ENCODE measurements at regions of chr6 and their contacts with region 1.

Region 1: GRCh38 chr6:152129691-152130151 is 322.2 kb downstream of the ESR1 start:
- DNase-seq: peak in 1 of 5 donors; percentile 29
- ATAC-seq: peak; percentile 58 to 81 (median 80)
- H3K4me3 ChIP-seq: peak overlapping the region in 10 of 12 donors; percentile 1 to 53 (median 41)
- H3K27ac ChIP-seq: peak overlapping the region; percentile 52 to 82 (median 72)
- H3K4me1 ChIP-seq: peaks cover 0 to 48% (median 19%) of the 10 kb centered on the region in 12 donors
- H3K27me3 ChIP-seq: no peaks in the 10 kb centered on the region
- CTCF ChIP-seq: no peak
- POLR2A ChIP-seq: no peak

Region 2: GRCh38 chr6:151765444-151765886 is 364.3 kb before region 1 on chr6:
- intact Hi-C with region 1: loop called (anchors 2 to 5 kb)
- DNase-seq: peak in 4 of 5 donors; percentile 27 to 41 (median 32)
- ATAC-seq: peak in 3 of 4 donors; percentile 61 to 65 (median 61)
- H3K4me3 ChIP-seq: no peak overlapping the region
- H3K27ac ChIP-seq: no peak overlapping the region
- H3K4me1 ChIP-seq: peaks cover 0 to 12% (median 1%) of the 10 kb centered on the region in 12 donors
- H3K27me3 ChIP-seq: no peaks in the 10 kb centered on the region
- CTCF ChIP-seq: peak; percentile 58 to 81 (median 73)
- POLR2A ChIP-seq: no peak

Region 3: DNA sequence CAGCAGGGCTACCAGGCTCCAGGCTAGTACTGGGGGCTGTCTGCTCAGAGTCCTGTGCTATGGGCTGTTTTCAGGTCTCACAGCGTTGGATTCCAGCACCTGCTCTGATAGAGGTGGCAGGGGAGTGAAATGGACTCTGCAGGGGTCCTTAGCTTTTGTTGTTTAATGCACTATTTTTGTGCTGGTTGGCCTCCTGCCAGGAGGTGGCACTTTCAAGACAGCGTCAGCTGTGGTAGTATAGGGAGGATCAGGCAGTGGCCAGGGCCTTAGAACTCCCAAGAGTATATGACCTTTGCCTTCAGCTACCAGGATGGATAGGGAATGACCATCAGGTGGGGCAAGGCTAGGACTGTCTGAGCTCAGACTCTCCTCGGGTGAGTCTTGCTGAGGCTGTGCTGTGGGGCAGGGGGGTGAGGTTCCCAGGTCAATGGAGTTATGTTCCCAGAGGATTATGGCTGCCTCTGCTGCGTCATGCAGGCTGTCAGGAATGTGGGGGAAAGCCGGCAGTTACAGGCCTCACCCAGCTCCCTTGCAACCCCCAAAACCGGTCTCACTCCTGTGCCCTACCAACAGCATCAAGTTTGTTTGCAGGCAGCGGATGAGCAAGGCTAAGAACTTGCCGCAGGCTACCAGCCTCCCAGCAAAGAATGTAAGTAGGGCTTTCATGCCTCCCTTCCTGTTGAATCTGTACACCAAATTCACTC is 228.8 kb before region 1 on chr6:
- intact Hi-C with region 1: no loop called
- DNase-seq: no peak
- ATAC-seq: no peak
- H3K4me3 ChIP-seq: no peak overlapping the region
- H3K27ac ChIP-seq: no peak overlapping the region
- H3K4me1 ChIP-seq: no peaks in the 10 kb centered on the region
- H3K27me3 ChIP-seq: no peaks in the 10 kb centered on the region
- CTCF ChIP-seq: no peak
- POLR2A ChIP-seq: no peak